ENCODE measurements at regions of chr3 and their contacts with region 1.

Region 1: DNA sequence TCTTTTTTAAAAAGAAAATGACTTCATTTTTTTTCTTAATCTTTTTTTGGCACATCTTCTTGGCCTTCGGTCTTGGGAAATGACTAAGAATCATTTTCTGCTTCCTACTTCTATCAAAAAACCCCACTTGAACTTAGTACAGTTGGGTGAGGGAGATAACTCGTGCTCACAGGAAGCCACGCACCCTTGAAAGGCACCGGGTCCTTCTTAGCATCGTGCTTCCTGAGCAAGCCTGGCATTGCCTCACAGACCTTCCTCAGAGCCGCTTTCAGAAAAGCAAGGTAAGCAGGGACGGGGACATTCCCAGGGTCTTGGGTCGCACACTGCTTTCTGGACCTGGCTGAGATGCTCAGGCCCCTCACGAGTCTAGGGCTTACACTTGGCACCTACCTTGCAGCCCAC is at the start of gene CCR4:
- DNase-seq: peak; percentile 74
- H3K4me3 ChIP-seq: peak within 1 kb of the TSS in 3 of 8 donors; percentile 5 to 51 (median 16)
- H3K27ac ChIP-seq: peak within 1 kb of the TSS in 2 of 8 donors; percentile 5 to 56
- H3K4me1 ChIP-seq: peaks cover 0 to 18% (median 9%) of the 10 kb centered on the region in 6 donors
- H3K27me3 ChIP-seq: no peaks in the 10 kb centered on the region
- CTCF ChIP-seq: no peak
- POLR2A ChIP-seq: no peak
- total RNA-seq, gene CCR4: 4.3 to 9.4 (median 5.6) TPM

Region 2: DNA sequence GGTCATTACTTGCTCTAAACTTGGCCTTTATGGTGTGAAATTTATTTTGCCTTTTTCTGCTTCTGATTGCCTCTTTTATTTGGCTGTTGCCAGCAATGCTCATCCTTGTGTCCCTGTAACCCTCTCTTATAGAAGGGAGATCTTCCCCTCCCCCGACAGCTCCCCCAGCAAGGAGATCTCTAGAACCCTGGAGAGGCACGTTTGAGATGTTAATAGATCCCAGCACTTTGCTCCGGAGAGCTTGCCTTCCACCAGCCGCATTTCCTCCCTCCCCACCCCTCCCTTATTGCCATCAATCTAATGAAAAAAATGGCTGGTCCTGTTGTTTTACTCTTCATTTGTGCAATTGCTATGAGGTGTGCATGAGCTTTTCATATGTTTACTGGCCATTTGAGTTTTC is 115.5 kb before region 1 on chr3:
- intact Hi-C with region 1: no loop called
- DNase-seq: no peak
- H3K4me3 ChIP-seq: no peak overlapping the region
- H3K27ac ChIP-seq: no peak overlapping the region
- H3K4me1 ChIP-seq: no peaks in the 10 kb centered on the region
- H3K27me3 ChIP-seq: peaks cover 0 to 45% (median 0%) of the 10 kb centered on the region in 7 donors
- CTCF ChIP-seq: no peak
- POLR2A ChIP-seq: no peak

Region 3: DNA sequence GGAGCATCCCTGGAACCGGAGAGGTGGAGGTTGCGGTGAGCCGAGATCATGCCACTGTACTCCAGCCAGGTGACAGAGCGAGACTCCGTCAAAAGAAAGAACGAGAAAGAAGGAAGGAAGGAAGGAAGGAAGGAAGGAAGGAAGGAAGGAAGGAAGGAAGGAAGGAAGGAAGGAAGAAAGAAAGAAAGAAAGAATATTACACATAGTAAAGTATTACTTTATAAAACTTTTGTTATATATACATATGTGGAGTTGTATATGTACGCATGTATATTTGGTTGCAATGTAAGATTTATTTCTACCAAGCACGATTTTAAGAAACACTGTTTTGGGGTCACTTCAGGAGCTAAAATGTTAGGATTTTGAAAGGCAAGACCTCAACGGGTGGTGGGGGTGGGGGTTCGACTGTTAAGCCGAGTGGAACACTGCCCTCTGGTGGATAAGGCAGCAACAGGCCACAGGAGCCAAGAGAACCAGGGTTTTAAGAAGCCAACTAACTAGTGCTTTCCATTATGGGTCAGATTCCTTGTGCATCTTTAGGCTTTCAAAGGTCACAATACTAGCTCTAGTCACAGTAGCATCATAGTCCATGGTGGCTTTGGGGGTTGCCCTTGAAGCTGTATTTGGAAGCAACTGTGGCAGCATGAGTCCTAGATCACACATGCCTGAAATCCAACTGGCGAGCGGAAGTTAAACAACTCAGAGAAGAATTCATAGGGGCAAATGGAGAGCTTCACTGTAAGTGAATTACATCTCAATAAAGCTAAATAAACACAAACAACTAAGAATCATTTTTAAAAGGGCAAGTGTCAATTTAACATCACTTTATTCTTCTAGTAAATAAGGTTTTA is 123.0 kb after region 1 on chr3:
- intact Hi-C with region 1: loop called (anchors 2 kb)
- DNase-seq: no peak
- H3K4me3 ChIP-seq: no peak overlapping the region
- H3K27ac ChIP-seq: no peak overlapping the region
- H3K4me1 ChIP-seq: peaks cover 0 to 50% (median 12%) of the 10 kb centered on the region in 6 donors
- H3K27me3 ChIP-seq: no peaks in the 10 kb centered on the region
- CTCF ChIP-seq: peak; percentile 66 to 89 (median 86)
- POLR2A ChIP-seq: no peak

Region 4: DNA sequence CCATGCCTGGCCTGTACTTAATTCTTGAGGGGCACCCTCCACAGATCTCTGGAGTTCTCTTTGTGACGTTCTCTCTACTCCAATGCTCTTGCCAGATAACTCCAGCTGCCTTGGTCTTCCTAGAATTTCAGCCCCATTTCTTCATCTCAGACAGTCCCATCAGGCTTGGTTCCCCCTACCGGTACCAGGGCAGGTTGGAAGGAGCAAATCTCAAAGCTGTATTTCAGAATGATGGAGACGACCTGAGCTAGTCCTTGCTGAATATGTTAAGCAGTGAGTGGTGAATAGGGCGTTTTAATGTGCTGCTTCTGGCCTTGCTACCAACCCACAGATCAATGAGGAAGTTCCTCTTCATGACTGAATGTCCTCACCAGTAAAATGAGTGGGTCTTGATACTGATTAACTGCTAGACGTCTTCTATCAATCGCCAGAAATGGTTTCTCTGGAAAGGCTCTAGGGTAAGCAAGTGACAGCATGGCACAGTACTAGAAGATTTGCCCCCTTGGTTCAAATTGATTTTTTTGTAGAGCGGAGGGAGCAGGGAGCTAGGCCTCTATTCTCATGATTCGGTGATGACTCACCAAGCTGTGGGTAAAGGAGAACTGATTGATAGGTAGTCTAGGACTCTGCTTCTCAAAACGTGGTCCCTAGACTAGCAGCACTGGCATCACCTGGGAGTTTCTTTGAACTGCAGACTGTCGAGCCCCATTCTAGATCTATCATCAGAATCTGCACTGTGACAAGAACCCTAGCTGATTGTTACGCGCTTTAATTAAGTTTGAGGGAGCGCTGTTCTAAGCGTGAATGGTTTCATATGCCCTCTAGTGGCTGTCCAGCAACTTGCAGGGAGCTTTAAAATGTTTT is 421.0 kb after region 1 on chr3:
- intact Hi-C with region 1: loop called (anchors 10 kb)
- DNase-seq: no peak
- H3K4me3 ChIP-seq: peak overlapping the region in 1 of 8 donors; percentile 19
- H3K27ac ChIP-seq: no peak overlapping the region
- H3K4me1 ChIP-seq: peaks cover 0 to 9% (median 6%) of the 10 kb centered on the region in 6 donors
- H3K27me3 ChIP-seq: no peaks in the 10 kb centered on the region
- CTCF ChIP-seq: peak; percentile 65 to 86 (median 80)
- POLR2A ChIP-seq: no peak

Region 5: DNA sequence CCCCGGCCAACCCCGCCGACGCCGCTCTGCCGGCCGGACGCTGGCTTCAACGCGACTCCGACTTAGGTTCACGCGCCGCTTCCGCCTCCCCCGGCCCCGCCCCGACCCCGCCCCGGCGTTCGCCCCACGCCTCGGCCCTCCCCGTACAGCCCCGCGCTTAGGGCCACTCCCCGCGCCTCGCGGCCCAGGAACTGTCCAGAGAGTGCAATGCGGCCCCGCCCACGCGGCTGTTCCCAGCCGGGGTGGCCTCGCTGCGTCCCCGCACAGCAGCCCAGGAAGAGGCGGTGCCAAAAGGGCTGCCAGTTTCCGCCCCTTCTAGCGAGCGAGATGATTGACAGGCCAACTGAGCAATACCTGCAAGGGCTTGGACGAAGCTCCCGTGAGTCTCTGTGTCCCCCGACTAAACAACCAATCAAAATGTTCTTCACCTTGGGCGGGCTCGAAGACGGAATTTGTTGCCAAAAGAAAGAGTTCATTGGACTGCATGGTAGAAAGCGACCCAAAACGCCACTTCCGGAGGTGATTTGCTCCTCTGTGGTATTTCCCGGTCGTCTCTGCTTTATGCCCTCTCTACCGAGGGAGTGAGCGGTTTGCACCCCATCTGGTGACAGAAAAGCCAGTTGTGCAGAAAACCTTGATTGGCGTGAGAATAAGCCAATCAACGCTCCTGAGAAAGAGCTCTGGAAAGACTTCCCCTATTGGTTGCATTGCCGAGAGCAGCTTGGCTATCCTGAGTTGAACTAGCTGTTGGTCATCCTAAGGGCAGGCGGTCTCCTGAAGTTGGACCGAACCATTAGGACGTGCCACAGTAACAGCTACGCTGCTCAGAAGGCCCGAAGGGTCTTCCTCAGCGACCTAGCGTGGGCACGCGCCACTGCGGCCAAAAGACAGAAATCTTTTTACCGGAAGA is 489.2 kb after region 1 on chr3 and contains the start of gene UBP1:
- intact Hi-C with region 1: no loop called
- DNase-seq: peak; percentile 100
- H3K4me3 ChIP-seq: peak within 1 kb of the TSS; percentile 75 to 98 (median 82)
- H3K27ac ChIP-seq: peak within 1 kb of the TSS; percentile 94 to 99 (median 98)
- H3K4me1 ChIP-seq: peaks cover 23 to 52% (median 47%) of the 10 kb centered on the region in 6 donors
- H3K27me3 ChIP-seq: no peaks in the 10 kb centered on the region
- CTCF ChIP-seq: peak in 3 of 11 experiments; percentile 3 to 27 (median 21)
- POLR2A ChIP-seq: peak in 2 of 3 donors; percentile 35 to 76
- total RNA-seq, gene UBP1: 52.8 to 88.2 (median 73.4) TPM